ENCODE measurements at regions of chr1 and their contacts with region 1.

Region 1: DNA sequence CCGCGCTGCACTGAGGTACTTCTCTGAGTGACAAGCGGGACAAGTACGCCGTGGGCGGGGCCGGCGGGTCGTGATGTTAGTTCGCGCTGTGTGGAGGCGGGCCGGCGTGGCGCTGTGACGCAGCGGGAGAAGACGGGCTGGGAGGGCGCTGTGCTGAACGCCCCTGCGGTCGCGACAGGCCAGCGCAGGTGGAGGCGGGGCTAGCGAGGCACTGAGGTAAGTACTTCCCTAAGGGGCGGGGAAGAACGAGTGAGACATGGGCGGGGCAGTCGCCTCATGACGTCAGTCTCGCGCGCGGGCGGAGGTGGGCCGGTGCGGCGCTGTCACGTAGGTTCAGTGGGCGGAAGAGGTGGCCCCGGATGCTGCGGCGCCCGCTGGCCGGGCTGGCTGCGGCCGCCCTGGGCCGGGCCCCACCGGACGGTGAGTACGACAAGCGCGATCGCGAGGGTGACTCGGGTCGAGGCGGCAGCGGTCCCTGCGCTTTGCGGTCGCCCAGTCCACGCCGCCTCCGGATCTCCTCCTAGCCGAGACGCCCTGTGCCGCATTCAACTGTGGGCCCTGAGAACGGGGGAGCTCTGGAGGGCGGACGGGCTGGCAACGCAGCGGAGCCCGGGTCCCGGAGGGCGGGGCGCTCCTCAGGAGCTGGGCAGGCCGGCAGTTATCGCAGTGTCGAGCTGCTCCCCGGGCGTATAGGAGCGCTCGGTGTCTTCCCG is at the start of gene GUK1:
- DNase-seq: peak; percentile 100
- ATAC-seq: peak; percentile 96 to 97
- H3K4me3 ChIP-seq: peak within 1 kb of the TSS; percentile 72
- H3K27ac ChIP-seq: peak within 1 kb of the TSS; percentile 83
- H3K4me1 ChIP-seq: peaks cover 14% of the 10 kb centered on the region
- H3K27me3 ChIP-seq: no peaks in the 10 kb centered on the region
- total RNA-seq, gene GUK1: 151 to 202 (median 169) TPM

Region 2: GRCh38 chr1:228109073-228109961 is 30.8 kb before region 1 on chr1 and contains the start of gene MRPL55:
- intact Hi-C with region 1: no loop called
- DNase-seq: peak; percentile 97 to 99 (median 99)
- ATAC-seq: peak; percentile 95 to 96
- H3K4me3 ChIP-seq: peak within 1 kb of the TSS; percentile 55
- H3K27ac ChIP-seq: peak within 1 kb of the TSS; percentile 31
- H3K4me1 ChIP-seq: peaks cover 3% of the 10 kb centered on the region
- H3K27me3 ChIP-seq: no peaks in the 10 kb centered on the region
- total RNA-seq, gene MRPL55: 51.6 to 56.5 (median 52.8) TPM

Region 3: DNA sequence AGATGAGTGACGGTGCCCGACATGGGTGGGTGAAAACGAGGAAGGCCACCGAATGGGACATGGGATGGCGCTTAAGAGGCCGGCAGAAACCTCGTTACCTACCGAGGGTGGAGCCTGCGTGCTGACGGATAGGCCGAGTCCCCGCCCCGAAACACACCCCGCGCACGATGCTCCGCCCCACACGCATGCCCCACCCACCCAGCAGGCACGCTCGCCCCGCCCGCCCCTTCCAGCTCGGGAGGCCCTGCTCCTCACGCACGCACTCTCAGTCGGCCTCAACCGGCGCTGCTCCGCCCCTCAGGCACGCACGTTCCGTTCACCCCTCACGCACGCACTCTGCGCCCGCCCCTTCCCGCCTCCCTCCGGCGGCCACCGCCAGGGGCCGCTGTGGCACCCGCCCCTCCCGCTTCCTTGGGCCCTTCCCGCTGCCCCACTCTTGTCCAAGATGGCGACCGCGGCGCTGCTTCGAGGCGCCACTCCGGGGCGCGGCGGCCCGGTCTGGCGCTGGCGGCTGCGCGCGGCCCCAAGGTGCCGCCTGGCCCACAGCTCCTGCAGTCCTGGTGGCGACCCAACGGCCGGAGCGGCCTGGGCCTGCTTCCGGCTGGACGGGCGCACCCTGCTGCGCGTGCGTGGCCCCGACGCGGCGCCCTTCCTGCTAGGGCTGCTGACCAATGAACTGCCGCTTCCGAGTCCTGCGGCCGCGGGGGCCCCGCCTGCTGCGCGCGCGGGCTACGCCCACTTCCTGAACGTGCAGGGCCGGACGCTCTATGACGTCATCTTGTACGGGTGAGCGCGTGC is 25.5 kb after region 1 on chr1 and contains the start of gene IBA57:
- intact Hi-C with region 1: loop called in 1 of 4 experiments (anchors 1 kb)
- DNase-seq: peak; percentile 100
- ATAC-seq: peak; percentile 88 to 95
- H3K4me3 ChIP-seq: peak within 1 kb of the TSS; percentile 72
- H3K27ac ChIP-seq: peak within 1 kb of the TSS; percentile 99
- H3K4me1 ChIP-seq: peaks cover 2% of the 10 kb centered on the region
- H3K27me3 ChIP-seq: no peaks in the 10 kb centered on the region
- total RNA-seq, gene IBA57: 8.3 to 12.0 (median 10.3) TPM

Region 4: GRCh38 chr1:228500901-228501871 is 361.1 kb after region 1 on chr1:
- intact Hi-C with region 1: loop called in 1 of 4 experiments (anchors 10 kb)
- DNase-seq: peak; percentile 81 to 89 (median 88)
- ATAC-seq: peak; percentile 88 to 93
- H3K4me3 ChIP-seq: peak overlapping the region; percentile 32
- H3K27ac ChIP-seq: no peak overlapping the region
- H3K4me1 ChIP-seq: no peaks in the 10 kb centered on the region
- H3K27me3 ChIP-seq: no peaks in the 10 kb centered on the region

Measured in right cardiac atrium (tissue), 5 donors.